PC-3 (cell line): ENCODE measurements at regions of chrX and their contacts with region 1.

Region 1: DNA sequence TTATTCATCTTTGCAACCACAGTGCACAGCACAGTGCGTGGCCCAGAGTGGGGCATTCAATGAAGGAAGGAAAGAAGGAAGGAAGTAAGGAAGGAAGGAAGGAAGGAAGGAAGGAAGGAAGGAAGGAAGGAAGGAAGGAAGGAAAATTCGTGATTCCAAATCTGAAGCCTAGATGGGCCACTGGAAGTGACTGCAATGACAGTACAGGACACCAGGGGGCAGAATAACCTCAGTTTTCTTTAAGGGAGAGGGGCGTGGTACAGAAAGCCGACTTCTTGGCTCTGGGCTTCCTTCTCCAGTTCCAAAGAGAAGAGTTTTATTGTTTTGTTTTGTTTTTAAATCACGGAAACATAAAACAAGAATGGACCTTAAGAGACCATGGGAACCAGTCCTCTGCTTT is 47.8 kb downstream of the APLN start:
- DNase-seq: peak; percentile 77
- ATAC-seq: peak; percentile 51
- H3K4me3 ChIP-seq: no peak overlapping the region
- H3K27ac ChIP-seq: no peak overlapping the region
- H3K4me1 ChIP-seq: peaks cover 12% of the 10 kb centered on the region; the same call in 1 of the 2 replicates
- H3K27me3 ChIP-seq: no peaks in the 10 kb centered on the region
- CTCF ChIP-seq: peak; percentile 73

Region 2: GRCh38 chrX:129622757-129623341 is 15.9 kb after region 1 on chrX:
- CTCF ChIA-PET with region 1: no interaction called
- POLR2A ChIA-PET with region 1: no interaction called
- intact Hi-C with region 1: no loop called
- DNase-seq: no peak
- ATAC-seq: no peak
- H3K4me3 ChIP-seq: no peak overlapping the region
- H3K27ac ChIP-seq: no peak overlapping the region
- H3K4me1 ChIP-seq: no peaks in the 10 kb centered on the region
- H3K27me3 ChIP-seq: no peaks in the 10 kb centered on the region
- CTCF ChIP-seq: no peak

Region 3: DNA sequence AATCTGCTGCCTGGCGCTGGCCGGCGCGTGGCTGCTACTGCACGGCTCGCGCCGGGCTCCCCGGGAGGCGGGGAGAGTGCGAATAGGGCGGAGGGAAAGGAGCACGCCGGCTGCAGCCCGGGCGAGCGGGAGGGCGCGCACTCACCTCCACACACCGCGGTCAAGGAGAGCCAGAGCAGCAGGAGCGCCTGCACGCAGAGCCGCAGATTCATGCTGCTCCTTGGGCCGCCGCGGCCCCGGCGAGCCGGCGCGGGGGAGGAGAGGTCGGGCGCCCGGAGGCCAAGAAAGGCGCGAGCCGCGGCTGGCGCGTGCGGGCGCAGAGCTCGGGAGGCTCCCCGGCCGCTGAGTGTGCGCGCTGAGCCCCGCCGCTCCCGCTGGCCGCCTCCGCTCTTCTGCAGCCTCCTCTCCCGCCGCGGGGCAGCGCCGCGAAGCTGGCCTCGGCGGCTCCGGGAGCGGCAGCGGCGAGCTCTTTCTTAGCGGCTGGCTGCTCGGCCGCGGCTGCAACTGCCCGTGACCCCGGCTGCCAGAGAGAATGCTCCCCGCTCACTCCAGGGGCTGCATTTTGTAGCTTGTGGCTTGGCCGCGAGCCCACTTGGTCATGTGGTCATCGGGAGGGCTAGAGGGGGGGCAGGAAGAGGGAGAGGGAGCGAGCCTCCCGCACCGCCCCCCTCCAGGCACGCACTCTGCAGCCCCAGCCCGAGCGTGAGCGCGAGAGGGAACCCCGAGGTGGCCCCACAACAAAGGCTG is 47.7 kb after region 1 on chrX and contains the start of gene APLN:
- CTCF ChIA-PET with region 1: no interaction called
- POLR2A ChIA-PET with region 1: no interaction called
- intact Hi-C with region 1: loop called (anchors 2 kb)
- DNase-seq: peak; percentile 45
- ATAC-seq: peak; percentile 72
- H3K4me3 ChIP-seq: peak within 1 kb of the TSS; percentile 84
- H3K27ac ChIP-seq: no peak within 1 kb of the TSS
- H3K4me1 ChIP-seq: peaks cover 24% of the 10 kb centered on the region
- H3K27me3 ChIP-seq: no peaks in the 10 kb centered on the region
- CTCF ChIP-seq: no peak
- total RNA-seq, gene APLN: 8.5 and 11.6 TPM in 2 replicates

Region 4: DNA sequence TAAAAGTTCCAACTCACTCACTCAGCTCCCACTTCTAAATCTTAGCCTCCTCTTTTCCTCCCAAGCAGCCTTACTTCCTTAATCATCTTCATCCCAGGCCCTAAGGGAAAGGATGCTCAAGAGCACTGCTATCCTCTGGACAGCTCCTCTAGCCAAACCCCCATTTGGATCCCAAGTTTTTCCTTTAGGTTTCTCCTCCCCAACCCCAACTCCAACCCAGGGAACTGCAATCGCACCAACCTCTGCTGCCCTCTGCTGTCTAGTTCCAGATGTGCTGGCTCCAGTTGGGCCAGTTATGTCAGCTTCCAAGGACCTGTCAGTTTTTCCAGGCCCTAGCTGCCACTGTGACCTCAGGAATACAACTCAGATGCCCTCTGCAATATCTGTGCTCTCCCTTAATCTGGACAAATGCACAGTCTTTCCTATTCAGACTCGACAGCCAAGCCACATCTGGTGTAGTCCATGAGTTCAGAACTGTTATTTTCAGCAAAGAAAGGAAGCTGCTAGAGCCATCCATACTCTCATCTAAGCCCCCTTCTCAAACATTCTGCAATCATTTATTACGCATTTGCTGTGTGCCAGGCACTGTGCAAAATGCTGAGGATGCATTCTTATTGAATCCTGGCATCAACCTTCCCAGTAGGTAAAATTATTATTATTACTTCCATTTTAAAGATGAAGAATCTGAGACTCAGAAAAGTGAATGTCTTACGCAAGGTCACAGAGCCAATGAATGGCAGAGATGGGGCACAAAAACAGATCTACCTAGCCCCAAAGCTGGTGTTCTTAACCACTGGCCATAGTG is 119.6 kb after region 1 on chrX:
- CTCF ChIA-PET with region 1: interaction called, 4 read pairs
- POLR2A ChIA-PET with region 1: no interaction called
- intact Hi-C with region 1: loop called (anchors 1 kb)
- DNase-seq: peak; percentile 82
- ATAC-seq: peak; percentile 88
- H3K4me3 ChIP-seq: no peak overlapping the region
- H3K27ac ChIP-seq: no peak overlapping the region
- H3K4me1 ChIP-seq: peaks cover 13% of the 10 kb centered on the region; the same call in 1 of the 2 replicates
- H3K27me3 ChIP-seq: no peaks in the 10 kb centered on the region
- CTCF ChIP-seq: peak; percentile 86

Region 5: DNA sequence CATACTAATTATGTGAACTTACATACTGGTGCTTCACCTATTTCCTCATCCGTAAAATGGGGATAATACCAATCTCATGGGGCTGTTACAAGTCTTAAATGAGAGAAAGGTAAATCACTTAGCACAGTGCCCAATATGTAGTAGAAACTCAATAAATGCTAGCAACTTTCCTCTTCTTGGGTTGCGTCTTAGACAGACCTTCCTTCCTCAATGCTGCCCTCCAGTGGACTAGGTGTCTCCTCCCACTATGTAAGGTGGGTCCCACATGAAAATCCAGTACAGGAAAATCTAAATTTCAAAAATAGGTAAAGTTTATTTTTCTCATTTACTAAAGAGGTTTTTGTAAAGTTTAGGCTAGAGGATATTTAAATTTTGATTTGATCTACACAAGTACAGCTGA is 216.2 kb after region 1 on chrX:
- CTCF ChIA-PET with region 1: no interaction called
- POLR2A ChIA-PET with region 1: no interaction called
- intact Hi-C with region 1: loop called (anchors 1 kb)
- DNase-seq: peak; percentile 61
- ATAC-seq: peak; percentile 68; the same call in 1 of the 2 replicates
- H3K4me3 ChIP-seq: no peak overlapping the region
- H3K27ac ChIP-seq: no peak overlapping the region
- H3K4me1 ChIP-seq: no peaks in the 10 kb centered on the region
- H3K27me3 ChIP-seq: no peaks in the 10 kb centered on the region
- CTCF ChIP-seq: peak; percentile 72

Region 6: GRCh38 chrX:129905787-129906580 is 299.1 kb after region 1 on chrX and contains the start of gene UTP14A:
- CTCF ChIA-PET with region 1: no interaction called
- POLR2A ChIA-PET with region 1: no interaction called
- intact Hi-C with region 1: loop called (anchors 10 kb)
- DNase-seq: peak; percentile 94
- ATAC-seq: peak; percentile 96
- H3K4me3 ChIP-seq: peak within 1 kb of the TSS; percentile 98
- H3K27ac ChIP-seq: peak within 1 kb of the TSS; percentile 56
- H3K4me1 ChIP-seq: peaks cover 22% of the 10 kb centered on the region
- H3K27me3 ChIP-seq: no peaks in the 10 kb centered on the region
- CTCF ChIP-seq: no peak
- total RNA-seq, gene UTP14A: 20.2 and 40.5 TPM in 2 replicates

Region 7: GRCh38 chrX:130060122-130061069 is 453.5 kb after region 1 on chrX:
- CTCF ChIA-PET with region 1: no interaction called
- POLR2A ChIA-PET with region 1: no interaction called
- intact Hi-C with region 1: loop called (anchors 2 kb)
- DNase-seq: peak; percentile 86
- ATAC-seq: peak; percentile 88
- H3K4me3 ChIP-seq: peak overlapping the region; percentile 68
- H3K27ac ChIP-seq: no peak overlapping the region
- H3K4me1 ChIP-seq: peaks cover 5% of the 10 kb centered on the region; the same call in 1 of the 2 replicates
- H3K27me3 ChIP-seq: no peaks in the 10 kb centered on the region
- CTCF ChIP-seq: peak; percentile 79